GM13977 (cell line): ENCODE measurements at regions of chr15 and their contacts with region 1.

Region 1: DNA sequence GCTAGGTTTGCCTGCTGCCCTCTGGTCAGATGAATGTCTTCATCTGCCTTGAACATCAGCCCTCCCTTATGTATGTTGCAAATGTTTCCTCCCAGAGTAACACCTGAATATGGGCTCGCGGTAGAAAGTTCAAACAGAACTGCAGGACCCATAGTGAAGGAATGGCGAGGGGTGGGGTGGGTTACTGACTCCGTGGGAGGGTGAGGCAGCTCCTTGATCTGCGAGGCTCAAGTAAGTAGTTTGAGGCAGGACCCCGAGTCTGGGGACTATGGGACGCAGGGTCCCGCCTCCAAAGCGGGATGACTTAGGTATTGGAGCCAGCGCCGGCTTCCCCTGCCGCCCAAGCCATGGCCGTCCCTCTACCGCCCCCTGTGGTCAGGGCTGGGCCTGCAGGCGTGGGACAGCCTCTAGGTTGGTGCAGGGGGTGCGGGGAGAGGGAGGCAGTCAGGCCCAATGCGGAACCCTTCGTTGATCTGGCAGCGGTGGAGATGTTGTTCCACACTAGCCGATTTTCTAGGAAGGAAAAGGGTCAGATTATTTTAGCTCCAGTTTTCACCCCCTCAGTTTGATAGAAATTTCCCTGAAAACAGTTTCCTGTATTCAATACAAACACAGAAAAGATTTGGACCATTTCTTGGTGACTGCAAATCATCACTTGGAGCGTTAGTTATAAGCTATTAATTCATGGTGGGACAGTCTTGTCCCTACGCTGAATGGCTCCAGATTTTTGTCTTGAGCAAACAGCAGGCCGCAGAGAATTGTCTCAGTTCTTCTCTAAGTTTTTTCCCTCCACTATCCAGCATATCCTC is 72.3 kb downstream of the CORO2B start:
- DNase-seq: peak; percentile 71
- CTCF ChIP-seq: peak; percentile 82

Region 2: GRCh38 chr15:68316061-68316804 is 334.9 kb before region 1 on chr15:
- in situ Hi-C with region 1: loop called (anchors 25 kb)
- DNase-seq: no peak
- CTCF ChIP-seq: peak; percentile 50

Region 3: GRCh38 chr15:68559345-68560310 is 91.5 kb before region 1 on chr15:
- in situ Hi-C with region 1: loop called (anchors 25 kb)
- DNase-seq: peak; percentile 84
- CTCF ChIP-seq: peak; percentile 96

Region 4: DNA sequence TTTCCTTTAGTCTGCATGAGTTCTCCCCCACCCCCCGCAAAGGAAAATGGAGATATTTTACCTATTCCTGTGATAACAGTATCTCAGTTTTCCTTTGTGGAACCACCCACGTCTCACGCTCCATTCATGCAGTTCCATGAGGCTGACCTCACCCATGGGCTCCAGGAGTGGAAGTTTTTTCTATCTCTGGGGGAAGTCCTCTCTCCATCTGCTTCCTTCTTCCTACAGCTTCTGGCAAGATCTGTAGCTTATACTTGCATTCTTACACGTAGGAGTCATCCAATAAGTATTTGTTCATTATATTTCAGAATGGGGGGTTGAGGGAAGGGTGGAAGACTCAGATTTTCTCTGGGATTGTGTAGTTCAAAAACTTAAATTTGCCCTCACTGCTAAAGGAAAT is 503.6 kb after region 1 on chr15:
- in situ Hi-C with region 1: no loop called
- DNase-seq: no peak
- CTCF ChIP-seq: no peak

Region 5: DNA sequence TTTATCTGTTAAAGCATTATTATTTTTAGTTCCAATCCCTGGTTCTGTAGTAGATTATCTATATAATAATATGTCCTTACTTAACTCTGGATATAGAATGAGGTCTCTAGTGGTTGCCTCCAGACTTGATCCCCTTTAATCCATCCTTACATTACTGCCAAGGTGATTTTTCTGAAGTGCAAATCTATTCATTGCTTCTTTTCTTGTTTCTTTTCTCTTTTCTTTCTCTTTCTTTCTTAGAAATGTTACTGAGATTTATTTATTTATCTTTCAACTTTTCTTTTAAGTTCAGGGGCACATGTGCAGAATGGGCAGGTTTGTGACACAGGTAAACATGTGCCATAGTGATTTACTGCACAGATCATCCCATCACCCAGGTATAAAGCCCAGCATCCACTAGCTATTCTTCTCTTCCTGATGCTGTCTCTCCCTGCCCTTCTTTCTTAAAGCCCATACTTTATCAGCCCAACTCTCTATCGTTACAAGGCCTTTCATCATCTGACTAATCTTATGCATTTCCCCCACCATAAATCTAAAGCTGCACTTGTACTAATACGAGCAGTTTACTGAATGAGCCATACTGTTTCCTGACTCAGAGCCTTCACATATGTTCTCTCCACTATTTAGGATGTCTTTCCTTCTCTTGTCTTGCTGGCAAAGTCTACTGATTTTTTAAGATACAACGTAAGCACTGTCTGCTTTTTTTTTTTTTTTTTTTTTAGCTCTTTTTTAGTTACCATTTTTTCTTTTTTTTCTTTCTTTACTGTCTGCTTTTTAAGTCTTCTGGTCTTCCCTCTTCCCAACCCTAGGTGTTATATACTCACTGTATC is 513.9 kb after region 1 on chr15:
- in situ Hi-C with region 1: no loop called
- DNase-seq: no peak
- CTCF ChIP-seq: no peak